ENCODE measurements at regions of chr6 and their contacts with region 1.

Region 1: DNA sequence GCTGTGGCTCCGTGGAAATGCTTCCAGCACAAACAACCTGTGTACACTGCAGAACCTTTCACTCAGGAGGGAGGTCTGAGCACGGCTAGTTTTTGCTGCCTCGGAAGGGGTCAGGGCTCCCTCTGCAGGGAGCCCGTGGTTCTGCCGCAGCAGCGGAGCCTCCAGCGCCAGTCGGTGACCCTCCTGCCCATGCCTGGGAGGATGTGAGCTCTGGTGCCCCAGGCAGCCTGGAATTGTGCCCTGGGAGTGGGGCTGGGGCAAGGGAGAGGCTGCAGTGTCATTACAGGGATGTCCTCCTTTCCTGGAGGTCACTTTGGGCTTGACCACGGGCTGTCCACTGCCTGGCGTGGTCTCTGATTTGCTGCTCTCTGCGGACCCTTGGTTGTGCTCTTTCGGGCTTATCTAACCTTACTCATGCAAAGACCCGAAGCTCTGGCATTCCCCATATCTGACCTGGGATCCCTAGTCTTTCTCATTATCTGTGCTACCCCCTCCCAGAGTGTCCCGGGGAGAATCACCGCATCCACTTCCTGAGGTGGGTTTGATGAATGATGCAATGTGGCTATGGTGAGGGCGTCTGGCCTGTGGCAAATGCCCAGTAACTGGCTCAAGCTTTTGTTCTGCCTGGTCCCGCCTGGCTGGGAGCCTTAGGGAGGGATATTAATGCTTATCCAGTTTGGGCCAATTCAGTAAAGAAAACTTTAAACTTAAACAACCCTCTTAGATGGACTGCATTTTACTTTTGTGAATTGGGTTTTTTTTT is 59.6 kb upstream of the TAGAP start:
- DNase-seq: peak; percentile 46 to 85
- H3K4me3 ChIP-seq: no peak overlapping the region
- H3K27ac ChIP-seq: no peak overlapping the region
- H3K4me1 ChIP-seq: peaks cover 1 to 4% (median 2%) of the 10 kb centered on the region in 4 experiments; a peak in 6 of 7 replicates
- H3K27me3 ChIP-seq: no peaks in the 10 kb centered on the region; a peak in 1 of 7 replicates
- CTCF ChIP-seq: peak; percentile 94 to 96 (median 95)
- EP300 ChIP-seq: no peak
- POLR2A ChIP-seq: peak in 1 of 2 experiments; percentile 34; a peak in 1 of 3 replicates
- RAD21 ChIP-seq: peak; percentile 91 to 96

Region 2: GRCh38 chr6:158095671-158096070 is 1008.7 kb before region 1 on chr6:
- CTCF ChIA-PET with region 1: no interaction called
- POLR2A ChIA-PET with region 1: no interaction called
- DNase-seq: no peak
- H3K4me3 ChIP-seq: no peak overlapping the region
- H3K27ac ChIP-seq: no peak overlapping the region
- H3K4me1 ChIP-seq: no peaks in the 10 kb centered on the region
- H3K27me3 ChIP-seq: no peaks in the 10 kb centered on the region; a peak in 1 of 7 replicates
- CTCF ChIP-seq: no peak
- EP300 ChIP-seq: no peak
- POLR2A ChIP-seq: no peak
- RAD21 ChIP-seq: no peak

Region 3: GRCh38 chr6:159008656-159009288 is 95.6 kb before region 1 on chr6:
- CTCF ChIA-PET with region 1: interaction called, 106 read pairs
- POLR2A ChIA-PET with region 1: interaction called, 4 read pairs
- DNase-seq: no peak
- H3K4me3 ChIP-seq: no peak overlapping the region
- H3K27ac ChIP-seq: no peak overlapping the region
- H3K4me1 ChIP-seq: no peaks in the 10 kb centered on the region
- H3K27me3 ChIP-seq: no peaks in the 10 kb centered on the region
- CTCF ChIP-seq: peak in 2 of 3 experiments; percentile 15 to 43; a peak in 2 of 4 replicates
- EP300 ChIP-seq: no peak
- POLR2A ChIP-seq: no peak
- RAD21 ChIP-seq: peak; percentile 48 to 51

Region 4: DNA sequence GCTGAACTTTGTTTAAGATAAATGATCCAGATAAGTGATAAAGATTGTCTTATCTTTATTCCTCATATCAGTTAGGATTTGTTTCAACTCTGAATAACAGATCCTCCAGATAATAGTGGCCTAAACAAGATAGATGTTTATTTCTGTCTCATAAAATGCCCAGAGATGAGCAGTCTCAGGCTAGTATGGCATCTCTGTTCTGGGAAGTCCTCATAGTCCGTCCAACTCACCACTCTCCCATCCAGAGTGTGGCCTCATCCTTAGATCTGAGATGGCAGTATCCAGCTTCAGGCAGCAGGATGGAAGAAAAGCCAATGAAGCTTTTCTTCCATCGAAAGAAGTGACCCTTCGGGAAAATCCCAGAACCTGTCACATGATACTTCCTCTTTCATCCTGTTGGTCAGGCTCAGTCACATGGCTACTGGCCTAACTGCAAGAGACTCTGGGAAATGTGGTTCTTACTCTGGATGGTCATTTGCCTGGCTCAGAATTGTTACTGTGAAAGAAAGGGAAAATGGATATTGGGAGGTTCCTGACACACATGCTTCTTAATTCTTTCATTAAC is 30.1 kb before region 1 on chr6:
- CTCF ChIA-PET with region 1: interaction called, 20 read pairs
- POLR2A ChIA-PET with region 1: no interaction called
- DNase-seq: no peak
- H3K4me3 ChIP-seq: peak overlapping the region; percentile 38 to 62 (median 50)
- H3K27ac ChIP-seq: no peak overlapping the region
- H3K4me1 ChIP-seq: 0 out of 7 replicates have a peak, but pooled peaks cover 0 to 2% (median 0%) of the 10 kb centered on the region in 4 experiments
- H3K27me3 ChIP-seq: peaks cover 0 to 4% (median 0%) of the 10 kb centered on the region in 4 experiments; a peak in 2 of 7 replicates
- CTCF ChIP-seq: no peak
- EP300 ChIP-seq: no peak
- POLR2A ChIP-seq: peak in 1 of 2 experiments; percentile 41; a peak in 1 of 3 replicates
- RAD21 ChIP-seq: no peak

Region 5: GRCh38 chr6:159116343-159116742 is 12.0 kb after region 1 on chr6:
- CTCF ChIA-PET with region 1: interaction called, 20 read pairs
- POLR2A ChIA-PET with region 1: interaction called, 3 read pairs
- DNase-seq: no peak
- H3K4me3 ChIP-seq: no peak overlapping the region
- H3K27ac ChIP-seq: no peak overlapping the region
- H3K4me1 ChIP-seq: no peaks in the 10 kb centered on the region
- H3K27me3 ChIP-seq: peaks cover 0 to 2% (median 0%) of the 10 kb centered on the region in 4 experiments; a peak in 1 of 7 replicates
- CTCF ChIP-seq: no peak
- EP300 ChIP-seq: no peak
- POLR2A ChIP-seq: no peak
- RAD21 ChIP-seq: no peak

Region 6: GRCh38 chr6:159390381-159390780 is 286.0 kb after region 1 on chr6:
- CTCF ChIA-PET with region 1: no interaction called
- POLR2A ChIA-PET with region 1: no interaction called
- DNase-seq: no peak
- H3K4me3 ChIP-seq: no peak overlapping the region
- H3K27ac ChIP-seq: no peak overlapping the region
- H3K4me1 ChIP-seq: no peaks in the 10 kb centered on the region
- H3K27me3 ChIP-seq: no peaks in the 10 kb centered on the region
- CTCF ChIP-seq: no peak
- EP300 ChIP-seq: no peak
- POLR2A ChIP-seq: no peak
- RAD21 ChIP-seq: no peak

Measured in H1 (cell line).